CD4-positive, alpha-beta memory T cell (primary cell): ENCODE measurements at regions of chr3 and their contacts with region 1.

Region 1: GRCh38 chr3:33054100-33055092 is 42.5 kb downstream of the GLB1 start:
- DNase-seq: no peak
- H3K4me3 ChIP-seq: peak overlapping the region in 1 of 2 donors; percentile 18
- H3K4me3 Mint-ChIP-seq: peak overlapping the region; percentile 36 to 91 (median 81)
- H3K27ac ChIP-seq: peak overlapping the region; percentile 74
- H3K27ac Mint-ChIP-seq: peak overlapping the region; percentile 94 to 99 (median 98)
- H3K4me1 ChIP-seq: peaks cover 90% of the 10 kb centered on the region
- H3K4me1 Mint-ChIP-seq: peaks cover 54 to 89% (median 75%) of the 10 kb centered on the region in 4 donors
- H3K27me3 ChIP-seq: no peaks in the 10 kb centered on the region
- H3K27me3 Mint-ChIP-seq: no peaks in the 10 kb centered on the region

Region 2: DNA sequence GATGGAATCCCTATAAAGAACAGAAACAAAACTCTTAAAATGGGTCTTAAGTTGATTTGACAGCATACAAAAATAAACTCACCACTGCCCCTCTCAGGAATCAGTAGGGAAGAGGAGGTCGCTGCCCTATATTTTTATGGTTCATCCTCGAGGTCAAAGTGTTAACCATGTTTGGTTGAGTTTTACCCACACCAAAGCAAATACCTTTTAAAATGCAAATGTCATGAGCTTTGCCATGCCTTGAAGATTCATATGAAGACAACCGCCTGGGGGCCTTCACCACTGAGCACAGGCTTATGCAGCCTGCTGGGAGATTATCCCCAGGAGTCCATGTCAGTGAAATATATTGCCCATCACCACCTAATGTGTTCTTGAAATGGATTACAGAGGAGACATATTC is 23.6 kb before region 1 on chr3:
- CTCF ChIA-PET with region 1: interaction called, 159 read pairs
- POLR2A ChIA-PET with region 1: interaction called, 687 read pairs
- intact Hi-C with region 1: no loop called
- DNase-seq: peak; percentile 58 to 77 (median 72)
- H3K4me3 ChIP-seq: no peak overlapping the region
- H3K4me3 Mint-ChIP-seq: peak overlapping the region in 7 of 8 donors; percentile 32 to 73 (median 54)
- H3K27ac ChIP-seq: no peak overlapping the region
- H3K27ac Mint-ChIP-seq: peak overlapping the region; percentile 52 to 94 (median 83)
- H3K4me1 ChIP-seq: peaks cover 29% of the 10 kb centered on the region
- H3K4me1 Mint-ChIP-seq: peaks cover 24 to 49% (median 31%) of the 10 kb centered on the region in 4 donors
- H3K27me3 ChIP-seq: no peaks in the 10 kb centered on the region
- H3K27me3 Mint-ChIP-seq: no peaks in the 10 kb centered on the region